ENCODE measurements at regions of chrX and their contacts with region 1.

Region 1: DNA sequence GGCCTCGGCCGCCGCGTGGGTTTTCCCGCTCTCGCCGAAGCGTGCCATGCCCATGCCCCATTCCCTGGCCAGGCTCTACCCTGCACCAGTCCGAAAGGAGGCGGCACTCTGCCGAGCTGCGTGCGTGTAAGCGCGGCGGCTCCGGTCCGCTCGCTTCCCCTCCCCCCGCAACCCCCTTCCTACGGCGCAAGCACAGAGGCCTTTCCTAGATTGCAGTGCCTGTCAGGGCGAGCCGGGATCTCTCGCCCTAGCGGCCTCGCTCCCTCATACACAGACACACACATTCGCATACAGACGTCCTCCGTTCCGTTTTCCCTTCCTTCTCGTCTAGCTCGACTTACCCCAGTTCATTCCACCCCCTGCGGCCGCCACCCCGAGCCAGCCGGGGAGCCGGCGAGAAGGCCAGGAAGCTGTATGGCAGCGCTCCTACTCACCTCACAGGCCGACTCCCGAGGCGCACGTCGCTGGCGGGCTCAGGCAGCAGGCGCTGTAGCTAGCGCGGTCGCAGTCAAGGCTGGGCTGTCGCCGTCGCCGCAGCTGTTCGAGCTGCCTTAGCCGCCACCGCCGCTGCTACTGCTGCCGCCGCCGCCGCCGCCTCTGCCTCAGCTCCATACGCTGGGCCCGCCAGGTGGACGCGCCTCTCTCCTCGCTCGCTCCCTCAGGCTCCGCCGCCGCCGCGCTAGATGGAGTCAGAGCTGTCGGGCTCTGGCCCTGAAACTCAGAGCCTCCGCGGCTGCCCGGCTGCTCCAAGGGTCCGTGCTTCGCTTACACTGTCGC is 615 bp downstream of the NEXMIF start:
- DNase-seq: peak; percentile 18
- ATAC-seq: peak; percentile 55
- H3K4me3 Mint-ChIP-seq: peak overlapping the region; percentile 87
- H3K27ac Mint-ChIP-seq: peak overlapping the region; percentile 80
- H3K4me1 Mint-ChIP-seq: peaks cover 25% of the 10 kb centered on the region
- H3K27me3 Mint-ChIP-seq: peaks cover 5% of the 10 kb centered on the region
- CTCF ChIP-seq: no peak

Region 2: GRCh38 chrX:75156021-75156945 is 231.6 kb after region 1 on chrX and contains the start of gene ABCB7:
- CTCF ChIA-PET with region 1: no interaction called
- POLR2A ChIA-PET with region 1: no interaction called
- intact Hi-C with region 1: loop called (anchors 10 kb)
- DNase-seq: peak; percentile 41
- ATAC-seq: peak; percentile 91
- H3K4me3 Mint-ChIP-seq: peak within 1 kb of the TSS; percentile 94
- H3K27ac Mint-ChIP-seq: peak within 1 kb of the TSS; percentile 96
- H3K4me1 Mint-ChIP-seq: peaks cover 39% of the 10 kb centered on the region
- H3K27me3 Mint-ChIP-seq: no peaks in the 10 kb centered on the region
- CTCF ChIP-seq: no peak
- total RNA-seq, gene ABCB7: 41.3 and 42.2 TPM in 2 replicates